Heart left ventricle (tissue), 16 donors: ENCODE measurements at regions of chr2 and their contacts with region 1.

Region 1: GRCh38 chr2:199739413-199740110 is 111.4 kb downstream of the FTCDNL1 start:
- DNase-seq: peak; percentile 21 to 83 (median 43)
- ATAC-seq: peak in 1 of 4 donors; percentile 56
- H3K4me3 ChIP-seq: peak overlapping the region in 1 of 12 donors; percentile 13
- H3K27ac ChIP-seq: peak overlapping the region in 1 of 12 donors; percentile 40
- H3K4me1 ChIP-seq: peaks cover 0 to 17% (median 0%) of the 10 kb centered on the region in 12 donors
- H3K27me3 ChIP-seq: peaks cover 0 to 37% (median 6%) of the 10 kb centered on the region in 9 donors
- CTCF ChIP-seq: peak; percentile 81 to 96 (median 93)
- POLR2A ChIP-seq: no peak

Region 2: DNA sequence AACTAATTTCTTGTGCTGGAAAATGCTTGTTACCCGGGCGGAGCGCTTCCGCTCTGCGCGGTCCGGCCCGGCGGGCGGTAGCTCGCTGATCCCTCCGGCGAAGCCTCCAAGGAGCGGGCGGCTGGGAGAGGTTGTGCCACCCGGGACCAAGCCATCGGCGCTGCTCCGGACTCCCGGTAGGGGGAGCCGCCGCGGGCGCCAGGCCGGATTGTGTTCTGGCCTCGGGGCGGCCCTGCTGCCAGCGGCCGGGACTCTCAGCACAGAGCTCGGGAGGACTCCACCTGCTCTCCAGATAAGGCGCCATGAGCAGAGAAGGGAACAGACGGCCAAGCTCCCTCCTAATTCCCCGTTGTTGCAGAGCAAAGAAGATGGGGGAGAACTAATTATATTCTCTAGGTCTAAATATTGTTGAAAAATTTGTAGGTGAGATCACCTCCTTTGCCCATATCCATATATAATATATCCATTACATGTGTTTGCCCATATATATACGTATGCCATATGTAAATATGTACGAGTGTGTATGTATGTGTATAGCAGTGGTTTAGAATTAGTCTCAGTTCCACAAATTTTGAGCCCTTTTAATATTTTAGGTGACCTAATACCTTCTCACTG is 268.0 kb before region 1 on chr2:
- intact Hi-C with region 1: loop called in 1 of 10 experiments (anchors 10 kb)
- DNase-seq: peak in 4 of 5 donors; percentile 46 to 75 (median 56)
- ATAC-seq: peak in 3 of 4 donors; percentile 80 to 95 (median 88)
- H3K4me3 ChIP-seq: peak overlapping the region in 1 of 12 donors; percentile 14
- H3K27ac ChIP-seq: no peak overlapping the region
- H3K4me1 ChIP-seq: peaks cover 0 to 36% (median 15%) of the 10 kb centered on the region in 12 donors
- H3K27me3 ChIP-seq: peaks cover 51 to 100% (median 89%) of the 10 kb centered on the region in 9 donors
- CTCF ChIP-seq: peak; percentile 36 to 70 (median 52)
- POLR2A ChIP-seq: no peak

Region 3: GRCh38 chr2:199663157-199663556 is 76.4 kb before region 1 on chr2:
- intact Hi-C with region 1: no loop called
- DNase-seq: no peak
- ATAC-seq: no peak
- H3K4me3 ChIP-seq: no peak overlapping the region
- H3K27ac ChIP-seq: no peak overlapping the region
- H3K4me1 ChIP-seq: peaks cover 0 to 5% (median 0%) of the 10 kb centered on the region in 12 donors
- H3K27me3 ChIP-seq: no peaks in the 10 kb centered on the region
- CTCF ChIP-seq: no peak
- POLR2A ChIP-seq: no peak